ENCODE measurements at regions of chr6 and their contacts with region 1.

Region 1: GRCh38 chr6:150079604-150080003 is 10.7 kb upstream of the ULBP3 start:
- DNase-seq: no peak
- ATAC-seq: peak; percentile 73
- H3K4me3 Mint-ChIP-seq: no peak overlapping the region
- H3K27ac Mint-ChIP-seq: no peak overlapping the region
- H3K4me1 Mint-ChIP-seq: peaks cover 11% of the 10 kb centered on the region; the same call in 1 of the 2 replicates
- H3K27me3 Mint-ChIP-seq: peaks cover 7% of the 10 kb centered on the region; the same call in 1 of the 2 replicates
- CTCF ChIP-seq: no peak

Region 2: GRCh38 chr6:150056156-150056555 is 23.4 kb before region 1 on chr6:
- CTCF ChIA-PET with region 1: interaction called, 11 read pairs
- POLR2A ChIA-PET with region 1: no interaction called
- DNase-seq: no peak
- ATAC-seq: no peak
- H3K4me3 Mint-ChIP-seq: no peak overlapping the region
- H3K27ac Mint-ChIP-seq: no peak overlapping the region
- H3K4me1 Mint-ChIP-seq: no peaks in the 10 kb centered on the region
- H3K27me3 Mint-ChIP-seq: peaks cover 47% of the 10 kb centered on the region
- CTCF ChIP-seq: no peak

Region 3: DNA sequence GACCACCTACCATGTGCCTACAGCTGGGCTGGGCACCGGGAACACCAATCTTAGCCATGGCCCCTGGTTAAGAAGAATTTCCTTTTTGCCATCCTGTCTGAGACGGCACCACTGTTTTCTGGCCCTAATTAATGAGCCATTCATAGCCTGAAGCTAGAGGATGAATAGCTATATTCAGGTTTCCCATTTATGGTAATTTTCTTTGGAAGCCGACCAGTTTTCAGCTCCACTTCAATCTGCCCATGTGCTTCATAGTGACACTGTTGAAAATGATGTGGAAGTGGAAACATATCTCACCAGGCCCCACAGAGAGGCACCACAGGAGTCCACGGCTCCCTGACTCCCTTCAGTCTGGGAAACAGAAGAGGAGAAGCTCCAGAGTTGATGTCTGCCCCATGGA is 11.9 kb after region 1 on chr6:
- CTCF ChIA-PET with region 1: interaction called, 19 read pairs
- POLR2A ChIA-PET with region 1: no interaction called
- DNase-seq: no peak
- ATAC-seq: no peak
- H3K4me3 Mint-ChIP-seq: no peak overlapping the region
- H3K27ac Mint-ChIP-seq: no peak overlapping the region
- H3K4me1 Mint-ChIP-seq: no peaks in the 10 kb centered on the region
- H3K27me3 Mint-ChIP-seq: no peaks in the 10 kb centered on the region
- CTCF ChIP-seq: no peak

Region 4: DNA sequence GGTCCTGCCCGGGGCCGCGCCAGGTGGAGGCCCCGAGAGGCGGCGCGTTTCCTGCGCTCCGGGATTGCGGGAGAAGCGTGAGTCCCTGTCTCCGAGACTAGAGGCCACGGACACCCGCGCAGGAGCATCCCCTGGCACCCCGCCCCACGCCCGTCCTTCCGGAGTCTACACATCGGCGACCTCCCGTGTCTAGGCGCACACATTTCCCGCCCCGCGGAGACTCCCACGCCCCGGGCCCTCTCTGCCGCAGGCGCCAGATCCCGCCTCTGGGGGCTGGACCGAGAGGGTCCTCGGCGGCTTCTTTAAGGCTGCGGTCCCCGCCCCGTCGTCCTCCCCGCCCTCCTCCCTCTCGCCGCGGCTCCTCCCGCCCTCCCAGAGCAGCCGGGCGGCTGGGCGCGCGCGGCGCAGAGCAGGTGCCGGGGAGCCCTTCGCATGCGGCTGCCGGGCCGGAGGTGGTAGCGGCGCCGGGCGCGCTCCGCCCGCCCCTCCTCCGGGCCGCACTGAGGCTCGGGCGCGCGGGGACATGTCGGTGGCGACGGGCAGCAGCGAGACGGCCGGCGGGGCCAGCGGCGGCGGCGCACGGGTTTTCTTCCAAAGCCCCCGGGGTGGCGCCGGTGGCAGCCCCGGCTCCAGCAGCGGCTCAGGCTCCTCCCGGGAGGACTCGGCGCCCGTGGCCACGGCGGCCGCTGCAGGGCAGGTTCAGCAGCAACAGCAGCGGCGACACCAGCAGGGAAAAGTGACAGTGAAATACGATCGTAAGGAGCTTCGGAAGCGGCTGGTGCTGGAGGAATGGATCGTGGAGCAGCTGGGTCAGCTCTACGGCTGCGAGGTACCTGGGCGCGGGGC is 63.3 kb after region 1 on chr6 and contains the start of gene PPP1R14C:
- CTCF ChIA-PET with region 1: interaction called, 24 read pairs
- POLR2A ChIA-PET with region 1: no interaction called
- DNase-seq: peak; percentile 71
- ATAC-seq: peak; percentile 76
- H3K4me3 Mint-ChIP-seq: peak within 1 kb of the TSS; percentile 75
- H3K27ac Mint-ChIP-seq: no peak within 1 kb of the TSS
- H3K4me1 Mint-ChIP-seq: peaks cover 31% of the 10 kb centered on the region
- H3K27me3 Mint-ChIP-seq: peaks cover 74% of the 10 kb centered on the region
- CTCF ChIP-seq: no peak
- total RNA-seq, gene PPP1R14C: 0.66 to 1.1 TPM (median 0.80 TPM) in 3 replicates

Region 5: DNA sequence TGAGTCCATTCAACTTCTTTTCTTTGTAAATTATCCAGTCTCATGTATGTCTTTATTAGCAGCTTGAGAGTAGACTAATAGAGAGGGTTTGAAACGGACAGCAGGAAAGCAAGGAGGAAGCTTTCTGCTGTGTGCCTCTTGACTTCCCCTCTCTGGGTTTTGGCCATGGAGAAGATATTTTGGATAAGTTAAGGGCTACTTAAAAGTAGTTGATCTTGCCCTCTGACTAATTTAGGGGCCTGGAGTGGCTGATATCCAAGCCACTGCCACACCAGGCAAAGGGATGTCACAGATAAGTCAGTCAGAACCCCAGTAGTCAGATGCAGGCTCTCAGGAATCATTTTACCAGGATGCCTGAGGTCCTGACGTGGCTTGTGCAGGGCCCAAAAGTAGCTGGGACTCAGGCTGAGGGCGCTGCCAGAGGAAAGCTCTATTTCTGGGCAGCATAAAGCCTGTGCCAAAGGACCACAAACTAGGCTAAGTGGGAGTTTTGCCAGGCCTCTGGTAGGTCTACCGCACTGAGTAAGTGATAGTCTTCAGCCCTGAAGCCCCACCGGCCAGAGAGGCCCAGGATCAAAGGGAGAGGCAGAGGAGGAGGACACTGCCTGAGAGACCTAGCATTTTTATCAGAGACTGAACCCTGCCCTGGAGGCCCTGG is 247.6 kb after region 1 on chr6:
- CTCF ChIA-PET with region 1: interaction called, 14 read pairs
- POLR2A ChIA-PET with region 1: no interaction called
- DNase-seq: no peak
- ATAC-seq: no peak
- H3K4me3 Mint-ChIP-seq: no peak overlapping the region
- H3K27ac Mint-ChIP-seq: no peak overlapping the region
- H3K4me1 Mint-ChIP-seq: peaks cover 6% of the 10 kb centered on the region
- H3K27me3 Mint-ChIP-seq: no peaks in the 10 kb centered on the region
- CTCF ChIP-seq: no peak

Region 6: GRCh38 chr6:150395398-150396009 is 315.9 kb after region 1 on chr6:
- CTCF ChIA-PET with region 1: interaction called, 47 read pairs
- POLR2A ChIA-PET with region 1: interaction called, 3 read pairs
- DNase-seq: peak; percentile 63
- ATAC-seq: peak; percentile 96
- H3K4me3 Mint-ChIP-seq: no peak overlapping the region
- H3K27ac Mint-ChIP-seq: no peak overlapping the region
- H3K4me1 Mint-ChIP-seq: no peaks in the 10 kb centered on the region
- H3K27me3 Mint-ChIP-seq: peaks cover 11% of the 10 kb centered on the region
- CTCF ChIP-seq: peak; percentile 51

Measured in WTC11 (cell line).